Right cardiac atrium (tissue), 5 donors: ENCODE measurements at regions of chr6 and their contacts with region 1.

Region 1: GRCh38 chr6:53651764-53652401 is 13.7 kb downstream of the KLHL31 start:
- DNase-seq: peak; percentile 75 to 86 (median 85)
- ATAC-seq: peak; percentile 90 to 93
- H3K4me3 ChIP-seq: peak overlapping the region; percentile 21
- H3K27ac ChIP-seq: no peak overlapping the region
- H3K4me1 ChIP-seq: no peaks in the 10 kb centered on the region
- H3K27me3 ChIP-seq: no peaks in the 10 kb centered on the region

Region 2: GRCh38 chr6:53492860-53493634 is 158.8 kb before region 1 on chr6:
- intact Hi-C with region 1: loop called in 2 of 4 experiments (anchors 5 to 10 kb)
- DNase-seq: no peak
- ATAC-seq: peak; percentile 76 to 84
- H3K4me3 ChIP-seq: peak overlapping the region; percentile 3
- H3K27ac ChIP-seq: no peak overlapping the region
- H3K4me1 ChIP-seq: no peaks in the 10 kb centered on the region
- H3K27me3 ChIP-seq: no peaks in the 10 kb centered on the region

Region 3: DNA sequence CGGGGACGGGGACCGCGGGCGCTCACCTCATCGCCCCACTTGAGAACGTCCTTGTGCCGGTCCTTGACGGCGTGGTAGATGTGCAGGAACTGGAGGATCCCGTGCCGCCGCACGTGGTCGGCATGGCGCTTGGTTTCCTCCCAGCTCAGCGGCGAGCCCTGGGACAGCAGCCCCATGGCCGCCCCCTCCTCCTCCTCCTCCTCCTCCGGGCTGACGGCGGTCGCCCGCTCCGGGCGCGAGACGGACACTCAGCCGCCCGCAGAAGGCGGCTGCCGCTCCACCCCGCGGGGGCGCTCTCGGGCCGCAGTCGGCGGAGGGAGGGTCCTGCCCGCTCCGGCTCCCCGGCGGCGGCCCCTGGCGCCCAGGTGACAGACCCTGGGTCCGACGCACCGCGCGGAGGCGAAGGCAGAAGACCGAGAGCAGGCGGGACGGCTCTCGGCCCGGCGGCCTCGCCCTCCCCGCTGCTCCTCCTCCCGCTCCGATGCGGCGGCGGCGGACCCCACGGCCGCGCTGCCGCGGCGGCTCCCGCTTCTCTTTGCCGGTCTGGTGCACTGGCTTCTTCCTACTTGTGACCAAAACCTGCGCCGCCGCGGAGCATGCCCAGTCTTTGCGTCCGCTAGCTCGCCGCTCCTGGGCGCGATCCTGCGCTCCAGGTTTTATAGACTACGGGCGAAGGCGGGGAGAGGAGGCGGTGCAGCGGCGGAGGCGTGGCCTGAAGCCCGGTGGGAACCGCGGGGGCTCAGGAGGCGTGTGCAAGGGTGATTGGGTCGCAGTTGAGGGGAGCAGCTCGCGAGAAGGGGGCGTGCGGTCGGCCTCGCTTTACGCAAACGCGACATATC is 107.2 kb before region 1 on chr6 and contains the start of gene GCLC:
- intact Hi-C with region 1: loop called in 3 of 4 experiments (anchors 5 to 10 kb)
- DNase-seq: peak; percentile 96 to 99 (median 98)
- ATAC-seq: peak; percentile 85
- H3K4me3 ChIP-seq: peak within 1 kb of the TSS; percentile 69
- H3K27ac ChIP-seq: peak within 1 kb of the TSS; percentile 90
- H3K4me1 ChIP-seq: peaks cover 4% of the 10 kb centered on the region
- H3K27me3 ChIP-seq: no peaks in the 10 kb centered on the region
- total RNA-seq, gene GCLC: 20.1 to 29.9 (median 23.8) TPM

Region 4: GRCh38 chr6:53556986-53557715 is 94.7 kb before region 1 on chr6:
- intact Hi-C with region 1: loop called in 1 of 4 experiments (anchors 10 kb)
- DNase-seq: no peak
- ATAC-seq: no peak
- H3K4me3 ChIP-seq: no peak overlapping the region
- H3K27ac ChIP-seq: no peak overlapping the region
- H3K4me1 ChIP-seq: no peaks in the 10 kb centered on the region
- H3K27me3 ChIP-seq: no peaks in the 10 kb centered on the region